A673 (cell line): ENCODE measurements at regions of chr1 and their contacts with region 1.

Region 1: DNA sequence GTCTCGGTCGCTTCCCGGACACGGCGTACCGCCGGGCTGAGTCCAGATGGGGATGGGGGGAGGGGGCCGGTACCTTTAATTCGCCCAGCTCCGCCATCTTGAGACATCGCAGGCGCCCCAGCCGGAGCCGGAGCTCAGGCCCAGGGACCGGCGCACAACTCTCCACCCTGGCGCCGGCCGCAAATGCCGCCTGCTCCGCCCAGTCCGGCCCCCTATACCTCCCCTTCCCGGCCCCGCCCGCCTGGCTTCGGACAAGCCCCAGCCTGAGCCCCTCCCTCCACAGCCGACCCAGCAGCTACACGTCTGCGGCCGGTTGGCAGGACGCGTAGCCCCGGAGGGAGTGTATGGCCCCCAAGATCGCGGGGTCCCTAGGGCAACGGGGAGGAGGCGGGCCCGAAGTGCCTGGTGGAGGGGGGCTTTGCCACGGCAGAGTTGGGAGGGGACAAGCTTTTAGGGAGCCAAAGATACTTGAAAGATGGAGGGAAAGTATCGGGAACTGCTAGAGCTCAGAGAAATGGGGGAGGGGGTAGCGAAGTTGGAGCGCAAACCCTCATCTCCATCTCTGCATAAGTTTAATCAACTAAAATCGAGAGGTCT is at the start of gene PIAS3:
- DNase-seq: peak; percentile 96
- H3K4me3 ChIP-seq: peak within 1 kb of the TSS; percentile 91
- H3K27ac ChIP-seq: peak within 1 kb of the TSS; percentile 78
- H3K4me1 ChIP-seq: peaks cover 9% of the 10 kb centered on the region
- H3K27me3 ChIP-seq: no peaks in the 10 kb centered on the region
- CTCF ChIP-seq: no peak
- total RNA-seq, gene PIAS3: 41.8 and 47.0 TPM in 2 replicates

Region 2: GRCh38 chr1:145751491-145752037 is 107.4 kb before region 1 on chr1:
- CTCF ChIA-PET with region 1: no interaction called
- POLR2A ChIA-PET with region 1: no interaction called
- intact Hi-C with region 1: no loop called
- DNase-seq: peak; percentile 67
- H3K4me3 ChIP-seq: no peak overlapping the region
- H3K27ac ChIP-seq: peak overlapping the region; percentile 41
- H3K4me1 ChIP-seq: peaks cover 26% of the 10 kb centered on the region
- H3K27me3 ChIP-seq: no peaks in the 10 kb centered on the region
- CTCF ChIP-seq: no peak

Region 3: GRCh38 chr1:145804235-145805045 is 54.6 kb before region 1 on chr1:
- CTCF ChIA-PET with region 1: no interaction called
- POLR2A ChIA-PET with region 1: no interaction called
- intact Hi-C with region 1: loop called (anchors 10 kb)
- DNase-seq: no peak
- H3K4me3 ChIP-seq: no peak overlapping the region
- H3K27ac ChIP-seq: no peak overlapping the region
- H3K4me1 ChIP-seq: peaks cover 15% of the 10 kb centered on the region
- H3K27me3 ChIP-seq: no peaks in the 10 kb centered on the region
- CTCF ChIP-seq: no peak

Region 4: GRCh38 chr1:145891587-145892485 is 32.8 kb after region 1 on chr1:
- CTCF ChIA-PET with region 1: interaction called, 14 read pairs
- POLR2A ChIA-PET with region 1: no interaction called
- intact Hi-C with region 1: loop called (anchors 5 kb)
- DNase-seq: peak; percentile 96
- H3K4me3 ChIP-seq: peak overlapping the region; percentile 16
- H3K27ac ChIP-seq: peak overlapping the region; percentile 54
- H3K4me1 ChIP-seq: peaks cover 20% of the 10 kb centered on the region
- H3K27me3 ChIP-seq: no peaks in the 10 kb centered on the region
- CTCF ChIP-seq: peak; percentile 98

Region 5: GRCh38 chr1:145927063-145927886 is 68.3 kb after region 1 on chr1 and contains the start of gene RBM8A:
- CTCF ChIA-PET with region 1: no interaction called
- POLR2A ChIA-PET with region 1: interaction called, 4 read pairs
- intact Hi-C with region 1: loop called (anchors 2 kb)
- DNase-seq: peak; percentile 99
- H3K4me3 ChIP-seq: peak within 1 kb of the TSS; percentile 68
- H3K27ac ChIP-seq: peak within 1 kb of the TSS; percentile 95
- H3K4me1 ChIP-seq: peaks cover 13% of the 10 kb centered on the region
- H3K27me3 ChIP-seq: no peaks in the 10 kb centered on the region
- CTCF ChIP-seq: peak; percentile 76
- total RNA-seq, gene RBM8A: 255 and 276 TPM in 2 replicates

Region 6: DNA sequence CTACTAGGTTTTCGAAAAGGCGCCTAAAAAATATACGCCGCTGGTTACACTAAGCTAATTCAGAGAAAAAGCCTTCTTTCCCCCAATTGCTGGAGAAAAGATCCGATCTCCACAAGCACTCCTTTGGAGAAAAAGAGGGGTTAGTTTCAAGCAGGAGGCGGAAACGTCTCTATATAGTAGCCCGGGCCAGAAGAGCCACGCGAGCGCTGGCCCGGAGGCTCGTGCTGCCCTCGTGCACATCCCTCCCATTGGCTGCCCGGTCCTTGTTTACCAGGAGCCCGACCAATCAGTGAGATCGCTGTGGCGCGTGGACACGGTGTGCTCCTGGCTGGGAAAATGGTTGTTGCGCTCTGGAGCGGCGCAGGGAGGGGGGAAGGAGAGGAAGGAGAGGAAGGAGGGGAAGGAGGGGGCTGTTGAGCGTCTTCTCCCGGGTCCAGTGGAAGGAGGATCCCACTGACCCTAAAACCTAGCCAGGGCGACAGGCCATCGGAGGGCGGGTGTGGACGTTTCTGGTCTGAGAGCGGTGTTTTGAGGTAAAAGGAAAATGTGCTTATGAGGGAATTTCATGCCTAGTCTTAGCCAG is 137.5 kb after region 1 on chr1 and contains the start of gene TXNIP:
- CTCF ChIA-PET with region 1: no interaction called
- POLR2A ChIA-PET with region 1: no interaction called
- intact Hi-C with region 1: loop called (anchors 5 kb)
- DNase-seq: peak; percentile 98
- H3K4me3 ChIP-seq: peak within 1 kb of the TSS; percentile 67
- H3K27ac ChIP-seq: peak within 1 kb of the TSS; percentile 72
- H3K4me1 ChIP-seq: peaks cover 35% of the 10 kb centered on the region
- H3K27me3 ChIP-seq: no peaks in the 10 kb centered on the region
- CTCF ChIP-seq: no peak
- total RNA-seq, gene TXNIP: 27.3 and 36.4 TPM in 2 replicates